Endothelial cell of umbilical vein (primary cell): ENCODE measurements at regions of chr10 and their contacts with region 1.

Region 1: GRCh38 chr10:50325449-50326171 is 74.3 kb upstream of the ASAH2 start:
- DNase-seq: peak; percentile 74
- H3K4me3 ChIP-seq: no peak overlapping the region
- H3K27ac ChIP-seq: peak overlapping the region; percentile 23
- H3K4me1 ChIP-seq: peaks cover 24% of the 10 kb centered on the region
- H3K27me3 ChIP-seq: no peaks in the 10 kb centered on the region
- CTCF ChIP-seq: no peak
- POLR2A ChIP-seq: no peak

Region 2: GRCh38 chr10:50310560-50311174 is 14.9 kb before region 1 on chr10:
- CTCF ChIA-PET with region 1: interaction called, 13 read pairs
- POLR2A ChIA-PET with region 1: no interaction called
- dilution Hi-C with region 1: no loop called
- intact Hi-C with region 1: no loop called
- DNase-seq: no peak
- H3K4me3 ChIP-seq: no peak overlapping the region
- H3K27ac ChIP-seq: no peak overlapping the region
- H3K4me1 ChIP-seq: no peaks in the 10 kb centered on the region
- H3K27me3 ChIP-seq: no peaks in the 10 kb centered on the region
- CTCF ChIP-seq: peak; percentile 38 to 42
- POLR2A ChIP-seq: no peak